ENCODE measurements at regions of chr9 and their contacts with region 1.

Region 1: GRCh38 chr9:112322701-112323377 is 10.6 kb downstream of the PTBP3 start:
- DNase-seq: no peak
- ATAC-seq: no peak
- H3K4me3 ChIP-seq: no peak overlapping the region
- H3K4me3 Mint-ChIP-seq: no peak overlapping the region
- H3K27ac ChIP-seq: no peak overlapping the region
- H3K27ac Mint-ChIP-seq: peak overlapping the region; percentile 3
- H3K4me1 ChIP-seq: peaks cover 37% of the 10 kb centered on the region
- H3K4me1 Mint-ChIP-seq: peaks cover 78% of the 10 kb centered on the region
- H3K27me3 ChIP-seq: no peaks in the 10 kb centered on the region
- H3K27me3 Mint-ChIP-seq: no peaks in the 10 kb centered on the region
- CTCF ChIP-seq: no peak

Region 2: GRCh38 chr9:112233768-112234167 is 89.1 kb before region 1 on chr9:
- CTCF ChIA-PET with region 1: no interaction called
- POLR2A ChIA-PET with region 1: no interaction called
- intact Hi-C with region 1: loop called in 1 of 2 experiments (anchors 5 kb)
- DNase-seq: no peak
- ATAC-seq: no peak
- H3K4me3 ChIP-seq: no peak overlapping the region
- H3K4me3 Mint-ChIP-seq: no peak overlapping the region
- H3K27ac ChIP-seq: no peak overlapping the region
- H3K27ac Mint-ChIP-seq: no peak overlapping the region
- H3K4me1 ChIP-seq: no peaks in the 10 kb centered on the region
- H3K4me1 Mint-ChIP-seq: peaks cover 10% of the 10 kb centered on the region
- H3K27me3 ChIP-seq: no peaks in the 10 kb centered on the region
- H3K27me3 Mint-ChIP-seq: no peaks in the 10 kb centered on the region
- CTCF ChIP-seq: no peak

Region 3: GRCh38 chr9:112288029-112288428 is 34.8 kb before region 1 on chr9:
- CTCF ChIA-PET with region 1: no interaction called
- POLR2A ChIA-PET with region 1: no interaction called
- intact Hi-C with region 1: loop called in 1 of 2 experiments (anchors 5 kb)
- DNase-seq: no peak
- ATAC-seq: no peak
- H3K4me3 ChIP-seq: no peak overlapping the region
- H3K4me3 Mint-ChIP-seq: no peak overlapping the region
- H3K27ac ChIP-seq: no peak overlapping the region
- H3K27ac Mint-ChIP-seq: no peak overlapping the region
- H3K4me1 ChIP-seq: no peaks in the 10 kb centered on the region
- H3K4me1 Mint-ChIP-seq: peaks cover 46% of the 10 kb centered on the region
- H3K27me3 ChIP-seq: no peaks in the 10 kb centered on the region
- H3K27me3 Mint-ChIP-seq: no peaks in the 10 kb centered on the region
- CTCF ChIP-seq: no peak

Region 4: GRCh38 chr9:112493393-112494137 is 170.7 kb after region 1 on chr9:
- CTCF ChIA-PET with region 1: no interaction called
- POLR2A ChIA-PET with region 1: no interaction called
- intact Hi-C with region 1: no loop called
- DNase-seq: no peak
- ATAC-seq: no peak
- H3K4me3 ChIP-seq: no peak overlapping the region
- H3K4me3 Mint-ChIP-seq: no peak overlapping the region
- H3K27ac ChIP-seq: no peak overlapping the region
- H3K27ac Mint-ChIP-seq: no peak overlapping the region
- H3K4me1 ChIP-seq: no peaks in the 10 kb centered on the region
- H3K4me1 Mint-ChIP-seq: peaks cover 28% of the 10 kb centered on the region
- H3K27me3 ChIP-seq: no peaks in the 10 kb centered on the region
- H3K27me3 Mint-ChIP-seq: no peaks in the 10 kb centered on the region
- CTCF ChIP-seq: no peak